ENCODE measurements at regions of chr19 and their contacts with region 1.

Region 1: DNA sequence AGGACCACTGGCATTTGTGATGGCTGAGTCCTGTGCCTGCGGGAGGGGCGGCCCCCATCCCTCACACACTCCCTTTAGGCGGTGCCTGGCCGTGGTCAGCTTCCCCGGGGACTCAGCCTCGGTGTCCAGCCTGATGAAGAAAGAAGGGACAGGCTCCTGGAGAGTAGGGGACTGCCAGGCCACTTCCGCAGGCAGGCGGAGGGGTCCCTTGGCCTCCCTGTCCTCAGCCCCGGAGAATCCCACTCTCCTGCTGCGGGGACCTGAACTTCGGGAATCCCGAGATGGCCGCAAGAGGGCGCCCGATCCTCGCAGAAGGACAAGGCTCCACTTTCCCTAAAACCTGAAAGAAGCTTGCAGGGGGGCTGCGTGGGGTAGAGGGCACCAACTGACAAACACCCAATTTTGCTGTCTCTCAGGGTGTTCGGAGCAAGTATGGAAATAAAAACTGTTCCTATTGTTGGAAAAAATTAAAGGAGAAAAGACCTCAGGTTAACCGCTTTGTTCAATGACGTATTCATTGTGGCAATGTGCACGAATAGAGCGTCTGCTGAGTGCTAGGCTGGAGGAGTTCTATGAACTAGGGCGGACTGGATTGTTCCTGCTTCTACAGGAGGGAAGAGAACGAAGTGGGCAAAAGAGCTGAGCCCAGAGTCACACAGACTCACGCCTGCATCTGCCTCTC is 297.3 kb downstream of the ZNF536 start:
- DNase-seq: no peak
- ATAC-seq: peak; percentile 63
- H3K4me3 ChIP-seq: no peak overlapping the region
- H3K27ac ChIP-seq: no peak overlapping the region
- H3K4me1 ChIP-seq: no peaks in the 10 kb centered on the region
- H3K27me3 ChIP-seq: no peaks in the 10 kb centered on the region
- CTCF ChIP-seq: peak; percentile 64 to 68 (median 65)
- EP300 ChIP-seq: no peak
- POLR2A ChIP-seq: no peak
- RAD21 ChIP-seq: peak; percentile 57

Region 2: DNA sequence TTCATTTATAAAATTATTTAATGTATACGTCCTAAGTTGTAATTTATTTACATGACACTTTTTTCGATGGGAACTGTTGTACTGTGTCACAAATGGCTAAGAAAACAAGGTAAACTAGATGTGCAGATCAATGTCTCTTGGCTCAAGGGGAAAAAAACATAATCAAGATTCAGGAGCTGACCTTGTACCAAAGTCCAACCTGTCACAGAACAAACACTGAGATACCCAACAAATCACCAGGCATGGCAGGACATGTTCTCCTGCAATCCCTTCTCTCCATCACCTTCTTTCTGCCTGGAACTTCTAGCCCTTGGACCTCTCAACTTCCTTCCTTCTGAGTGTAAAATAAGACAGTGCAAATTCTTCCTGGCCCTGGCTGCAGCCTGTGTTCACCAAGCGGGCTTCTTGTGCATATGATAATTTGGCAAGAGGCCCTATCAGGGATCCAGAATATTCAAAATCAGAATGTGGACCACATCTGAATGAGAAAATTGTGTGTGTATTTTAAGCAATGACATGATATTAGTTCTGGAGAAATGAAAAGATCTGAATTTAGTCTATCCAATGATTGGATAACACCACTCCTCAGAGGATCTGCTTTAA is 148.6 kb after region 1 on chr19:
- CTCF ChIA-PET with region 1: no interaction called
- POLR2A ChIA-PET with region 1: no interaction called
- RAD21 ChIA-PET with region 1: no interaction called
- SMC1A ChIA-PET with region 1: no interaction called
- in situ Hi-C with region 1: no loop called
- intact Hi-C with region 1: no loop called
- DNase-seq: no peak
- ATAC-seq: no peak
- H3K4me3 ChIP-seq: no peak overlapping the region
- H3K27ac ChIP-seq: no peak overlapping the region
- H3K4me1 ChIP-seq: no peaks in the 10 kb centered on the region
- H3K27me3 ChIP-seq: no peaks in the 10 kb centered on the region
- CTCF ChIP-seq: no peak
- EP300 ChIP-seq: no peak
- POLR2A ChIP-seq: no peak
- RAD21 ChIP-seq: no peak

Region 3: GRCh38 chr19:30864391-30865215 is 195.1 kb after region 1 on chr19:
- CTCF ChIA-PET with region 1: no interaction called
- POLR2A ChIA-PET with region 1: no interaction called
- RAD21 ChIA-PET with region 1: no interaction called
- SMC1A ChIA-PET with region 1: no interaction called
- in situ Hi-C with region 1: no loop called
- intact Hi-C with region 1: no loop called
- DNase-seq: no peak
- ATAC-seq: no peak
- H3K4me3 ChIP-seq: no peak overlapping the region
- H3K27ac ChIP-seq: no peak overlapping the region
- H3K4me1 ChIP-seq: no peaks in the 10 kb centered on the region
- H3K27me3 ChIP-seq: no peaks in the 10 kb centered on the region
- CTCF ChIP-seq: no peak
- EP300 ChIP-seq: no peak
- POLR2A ChIP-seq: no peak
- RAD21 ChIP-seq: no peak

Region 4: GRCh38 chr19:31583148-31583547 is 913.7 kb after region 1 on chr19:
- CTCF ChIA-PET with region 1: no interaction called
- POLR2A ChIA-PET with region 1: no interaction called
- RAD21 ChIA-PET with region 1: no interaction called
- SMC1A ChIA-PET with region 1: no interaction called
- in situ Hi-C with region 1: no loop called
- intact Hi-C with region 1: no loop called
- DNase-seq: no peak
- ATAC-seq: no peak
- H3K4me3 ChIP-seq: no peak overlapping the region
- H3K27ac ChIP-seq: no peak overlapping the region
- H3K4me1 ChIP-seq: no peaks in the 10 kb centered on the region
- H3K27me3 ChIP-seq: no peaks in the 10 kb centered on the region
- CTCF ChIP-seq: no peak
- EP300 ChIP-seq: no peak
- POLR2A ChIP-seq: no peak
- RAD21 ChIP-seq: no peak

Region 5: GRCh38 chr19:32224371-32225244 is 1555.1 kb after region 1 on chr19:
- CTCF ChIA-PET with region 1: interaction called, 12 read pairs
- POLR2A ChIA-PET with region 1: no interaction called
- RAD21 ChIA-PET with region 1: interaction called, 5 read pairs
- SMC1A ChIA-PET with region 1: interaction called, 3 read pairs
- in situ Hi-C with region 1: no loop called
- intact Hi-C with region 1: loop called (anchors 5 kb)
- DNase-seq: no peak
- ATAC-seq: peak; percentile 85
- H3K4me3 ChIP-seq: no peak overlapping the region
- H3K27ac ChIP-seq: no peak overlapping the region
- H3K4me1 ChIP-seq: no peaks in the 10 kb centered on the region
- H3K27me3 ChIP-seq: no peaks in the 10 kb centered on the region; a peak in 1 of 4 replicates
- CTCF ChIP-seq: peak; percentile 81 to 92 (median 91); a peak in 5 of 6 replicates
- EP300 ChIP-seq: no peak
- POLR2A ChIP-seq: no peak
- RAD21 ChIP-seq: peak; percentile 61